ENCODE measurements at regions of chr6 and their contacts with region 1.

Region 1: DNA sequence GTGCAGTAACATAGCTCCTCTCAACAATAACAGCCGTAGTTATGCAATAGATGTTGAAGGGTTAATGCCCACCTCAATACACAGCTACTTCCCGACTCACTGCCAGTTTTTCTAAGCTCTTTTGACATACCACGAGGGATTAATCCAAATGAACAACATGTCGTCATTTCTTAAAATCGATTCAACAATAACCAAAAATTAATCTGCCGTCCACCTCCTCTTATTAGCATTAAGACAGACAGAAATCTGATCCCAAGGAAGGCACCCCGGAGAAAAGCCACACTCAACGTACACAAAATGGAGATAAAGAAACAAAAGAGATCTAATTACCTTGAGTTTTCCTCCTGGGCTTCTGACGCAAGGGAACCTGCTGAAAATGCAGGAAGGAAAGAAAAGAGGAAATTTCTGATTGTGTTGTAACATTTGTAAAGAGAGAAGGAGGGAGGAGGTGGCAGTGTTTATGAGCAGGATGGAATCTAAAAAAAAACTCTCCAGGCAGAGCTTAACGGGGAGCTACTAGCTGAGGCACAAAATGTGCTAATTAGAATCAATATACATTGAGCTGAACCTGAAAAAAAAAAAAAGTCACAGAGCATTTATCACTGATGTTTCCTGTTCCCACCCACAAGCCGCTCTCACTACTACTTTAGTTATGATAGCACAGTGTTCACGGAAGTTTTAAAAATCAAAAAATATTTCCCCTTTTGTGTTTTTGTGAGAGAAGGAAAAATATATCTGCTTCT is 109.3 kb downstream of the IPCEF1 start:
- DNase-seq: peak; percentile 36
- H3K4me3 Mint-ChIP-seq: peak overlapping the region; percentile 84
- H3K27ac Mint-ChIP-seq: peak overlapping the region; percentile 82
- H3K4me1 Mint-ChIP-seq: peaks cover 82% of the 10 kb centered on the region
- H3K27me3 Mint-ChIP-seq: peaks cover 6% of the 10 kb centered on the region

Region 2: DNA sequence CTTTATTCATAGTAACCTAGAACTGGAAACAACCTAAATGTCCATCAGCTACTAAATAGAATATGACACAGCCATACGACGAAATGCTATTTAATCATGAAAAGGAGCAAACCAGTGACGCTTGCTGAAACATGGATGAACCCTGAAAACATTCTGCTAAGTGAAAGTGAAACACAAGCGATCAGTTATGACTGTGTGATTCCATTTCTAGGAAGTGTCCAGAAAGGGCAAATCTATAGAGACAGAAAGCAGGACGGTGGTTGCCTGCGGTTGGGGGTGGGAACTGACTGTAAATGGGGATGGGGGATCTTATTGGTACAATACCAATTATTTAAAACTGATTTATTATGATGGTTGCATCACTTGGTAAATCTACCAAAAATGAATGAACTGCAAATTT is 17.5 kb before region 1 on chr6:
- CTCF ChIA-PET with region 1: interaction called, 6 read pairs
- POLR2A ChIA-PET with region 1: interaction called, 116 read pairs
- DNase-seq: peak; percentile 77
- H3K4me3 Mint-ChIP-seq: peak overlapping the region; percentile 71
- H3K27ac Mint-ChIP-seq: peak overlapping the region; percentile 75
- H3K4me1 Mint-ChIP-seq: peaks cover 64% of the 10 kb centered on the region
- H3K27me3 Mint-ChIP-seq: no peaks in the 10 kb centered on the region

Region 3: DNA sequence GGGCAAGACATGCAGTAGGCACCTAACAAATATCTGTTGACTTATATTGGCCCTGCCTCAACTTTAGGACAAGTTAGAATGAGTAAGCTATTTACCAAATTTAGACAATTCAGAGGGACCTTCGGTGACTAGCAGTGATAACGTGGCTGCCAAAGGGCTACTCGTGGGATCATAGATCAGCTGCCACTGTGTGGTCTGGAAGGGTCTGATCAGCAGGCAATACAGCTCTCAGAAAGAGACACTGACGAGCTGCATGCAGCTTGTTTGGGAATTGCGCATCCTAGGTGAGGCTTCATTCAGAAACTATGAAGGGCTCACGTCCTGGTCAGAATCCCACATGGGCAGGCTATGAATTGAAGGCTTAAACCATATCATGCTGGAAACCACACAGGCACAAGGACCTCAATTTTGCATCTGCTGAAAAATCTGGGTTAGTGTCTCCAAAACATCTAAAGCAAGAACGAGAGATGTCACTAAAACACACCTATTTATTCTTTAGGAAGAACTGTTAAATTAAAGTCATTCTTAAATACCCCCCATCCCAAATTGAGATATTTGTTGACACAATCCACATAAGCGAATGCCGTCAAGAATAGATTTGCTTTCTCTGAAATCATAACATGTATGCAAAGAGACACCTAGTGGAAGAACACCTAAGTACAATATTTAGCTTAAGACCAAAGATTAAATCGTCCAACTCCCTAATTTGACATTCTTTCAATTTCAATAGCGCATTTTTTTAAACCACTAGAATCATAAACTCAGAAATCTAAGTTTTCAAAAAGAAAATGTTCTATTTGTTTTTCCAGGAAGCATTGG is 29.7 kb after region 1 on chr6:
- CTCF ChIA-PET with region 1: interaction called, 31 read pairs
- POLR2A ChIA-PET with region 1: interaction called, 3 read pairs
- DNase-seq: no peak
- H3K4me3 Mint-ChIP-seq: peak overlapping the region; percentile 30
- H3K27ac Mint-ChIP-seq: no peak overlapping the region
- H3K4me1 Mint-ChIP-seq: peaks cover 15% of the 10 kb centered on the region
- H3K27me3 Mint-ChIP-seq: no peaks in the 10 kb centered on the region

Region 4: DNA sequence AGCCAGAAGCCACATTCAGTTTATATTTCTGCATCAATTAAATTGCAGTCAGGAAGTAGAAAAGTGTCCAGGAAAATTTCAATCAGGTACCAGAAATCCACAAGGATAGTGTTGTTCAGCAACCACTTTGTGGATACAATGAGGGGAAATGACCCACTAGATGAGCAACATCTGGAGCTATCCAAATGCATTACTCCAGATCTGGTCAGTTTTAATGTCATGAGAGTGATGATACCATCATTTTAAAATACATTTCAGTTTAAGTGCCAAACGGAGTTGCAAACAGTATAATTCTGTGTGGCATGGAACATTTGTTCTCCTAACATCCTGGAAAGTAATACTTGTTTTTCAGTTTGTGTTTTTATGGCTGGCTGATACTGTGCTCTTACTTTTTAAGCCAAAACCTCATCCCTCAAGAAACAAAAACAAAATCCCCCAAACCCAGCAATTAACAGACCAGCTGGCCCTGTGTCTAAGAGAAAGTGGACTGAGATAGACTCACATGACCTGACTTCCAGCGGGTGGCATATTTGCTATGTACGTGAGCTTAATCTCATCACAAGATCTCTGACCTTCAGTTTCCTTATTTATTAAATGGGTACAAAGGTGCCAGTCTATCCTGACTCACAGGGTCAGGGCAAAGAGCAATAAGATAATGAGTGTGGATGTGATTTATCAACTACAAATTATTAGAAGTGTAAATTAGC is 322.0 kb after region 1 on chr6:
- CTCF ChIA-PET with region 1: no interaction called
- POLR2A ChIA-PET with region 1: no interaction called
- DNase-seq: no peak
- H3K4me3 Mint-ChIP-seq: no peak overlapping the region
- H3K27ac Mint-ChIP-seq: no peak overlapping the region
- H3K4me1 Mint-ChIP-seq: no peaks in the 10 kb centered on the region
- H3K27me3 Mint-ChIP-seq: no peaks in the 10 kb centered on the region